Posterior vena cava (tissue), 2 donors: ENCODE measurements at regions of chr16 and their contacts with region 1.

Region 1: GRCh38 chr16:56691885-56692284 is 9.6 kb downstream of the MT1X start:
- DNase-seq: peak; percentile 48

Region 2: DNA sequence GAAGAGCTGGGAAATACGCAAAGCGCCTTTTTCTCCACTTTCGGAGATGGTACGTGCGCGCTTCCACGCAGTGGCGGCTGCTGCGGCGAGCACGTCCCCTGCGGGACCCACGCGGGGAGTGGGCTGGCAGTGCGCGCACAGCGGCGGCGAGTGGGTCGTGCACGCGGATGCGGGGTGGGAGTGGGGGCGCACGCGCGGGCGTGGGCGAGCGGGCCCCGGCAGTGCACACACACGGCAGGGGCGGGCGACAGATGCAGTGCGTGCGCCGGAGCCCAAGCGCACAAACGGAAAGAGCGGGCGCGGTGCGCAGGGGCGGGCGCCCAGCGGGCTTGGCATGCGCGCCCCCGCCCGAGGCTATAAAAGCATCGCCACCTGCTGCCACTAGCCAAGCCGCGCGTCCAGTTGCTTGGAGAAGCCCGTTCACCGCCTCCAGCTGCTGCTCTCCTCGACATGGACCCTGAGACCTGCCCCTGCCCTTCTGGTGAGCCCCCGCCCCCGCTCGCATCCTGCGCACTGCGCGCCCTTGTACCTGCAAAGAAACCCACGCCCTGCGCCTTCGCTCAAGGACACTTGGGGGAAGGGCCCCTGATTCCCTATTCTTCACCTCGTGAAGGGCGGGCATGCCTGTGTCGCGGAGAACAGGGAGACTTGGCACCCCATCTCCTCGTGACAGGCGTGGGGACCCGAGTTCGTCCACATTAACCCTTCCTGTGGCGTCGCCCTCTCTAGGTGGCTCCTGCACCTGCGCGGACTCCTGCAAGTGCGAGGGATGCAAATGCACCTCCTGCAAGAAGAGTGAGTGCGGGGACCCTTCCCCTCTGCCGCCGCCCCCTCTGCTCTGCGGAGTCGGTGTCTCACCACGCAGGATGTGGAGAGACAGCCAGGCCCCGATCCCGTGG is 102.5 kb before region 1 on chr16 and contains the start of gene MT3:
- intact Hi-C with region 1: loop called in 1 of 2 experiments (anchors 10 kb)
- DNase-seq: no peak
- total RNA-seq, gene MT3: not detected